WTC11 (cell line): ENCODE measurements at regions of chr19 and their contacts with region 1.

Region 1: DNA sequence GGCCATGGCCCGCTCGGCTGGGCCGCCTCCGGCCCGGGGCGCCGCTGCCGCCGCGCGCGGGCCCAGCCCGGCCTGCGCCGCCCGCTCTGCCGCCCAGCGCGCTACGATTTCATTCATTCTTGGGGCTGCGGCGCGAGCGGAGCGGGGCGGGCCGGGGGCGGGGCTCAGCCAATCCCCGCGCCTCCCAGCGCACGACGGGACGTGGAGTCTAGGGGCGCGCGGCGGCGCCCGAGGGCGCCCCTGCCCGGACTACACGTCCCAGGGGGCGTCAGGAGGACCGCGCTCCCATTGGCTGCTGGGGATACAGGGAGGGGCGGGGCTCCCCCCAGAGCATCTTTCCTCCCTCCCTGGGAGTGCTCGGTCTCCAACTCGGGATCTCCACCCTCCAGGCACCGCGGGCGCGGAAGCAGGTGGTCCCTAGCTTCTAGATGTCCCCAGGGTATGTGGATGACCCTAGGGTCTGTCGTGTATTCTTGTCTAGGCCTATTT is 5.6 kb upstream of the DPF1 start:
- DNase-seq: peak; percentile 79
- ATAC-seq: peak; percentile 35
- H3K4me3 Mint-ChIP-seq: peak overlapping the region; percentile 58
- H3K27ac Mint-ChIP-seq: no peak overlapping the region
- H3K4me1 Mint-ChIP-seq: peaks cover 20% of the 10 kb centered on the region
- H3K27me3 Mint-ChIP-seq: peaks cover 40% of the 10 kb centered on the region
- CTCF ChIP-seq: no peak

Region 2: GRCh38 chr19:38250821-38251563 is 21.4 kb after region 1 on chr19:
- CTCF ChIA-PET with region 1: interaction called, 45 read pairs
- POLR2A ChIA-PET with region 1: no interaction called
- DNase-seq: peak; percentile 38
- ATAC-seq: peak; percentile 45
- H3K4me3 Mint-ChIP-seq: peak overlapping the region; percentile 63
- H3K27ac Mint-ChIP-seq: peak overlapping the region; percentile 75
- H3K4me1 Mint-ChIP-seq: peaks cover 46% of the 10 kb centered on the region
- H3K27me3 Mint-ChIP-seq: peaks cover 8% of the 10 kb centered on the region
- CTCF ChIP-seq: no peak

Region 3: GRCh38 chr19:38319421-38320258 is 90.0 kb after region 1 on chr19 and contains the start of gene KCNK6:
- CTCF ChIA-PET with region 1: interaction called, 13 read pairs
- POLR2A ChIA-PET with region 1: no interaction called
- DNase-seq: peak; percentile 66
- ATAC-seq: peak; percentile 5
- H3K4me3 Mint-ChIP-seq: peak within 1 kb of the TSS; percentile 81
- H3K27ac Mint-ChIP-seq: no peak within 1 kb of the TSS
- H3K4me1 Mint-ChIP-seq: peaks cover 26% of the 10 kb centered on the region
- H3K27me3 Mint-ChIP-seq: peaks cover 54% of the 10 kb centered on the region
- CTCF ChIP-seq: no peak
- total RNA-seq, gene KCNK6: 12.9 to 18.3 TPM (median 13.2 TPM) in 3 replicates

Region 4: GRCh38 chr19:38374429-38375176 is 145.0 kb after region 1 on chr19 and contains the start of gene PSMD8:
- CTCF ChIA-PET with region 1: interaction called, 18 read pairs
- POLR2A ChIA-PET with region 1: no interaction called
- DNase-seq: peak; percentile 99
- ATAC-seq: peak; percentile 99
- H3K4me3 Mint-ChIP-seq: peak within 1 kb of the TSS; percentile 100
- H3K27ac Mint-ChIP-seq: peak within 1 kb of the TSS; percentile 75
- H3K4me1 Mint-ChIP-seq: peaks cover 14% of the 10 kb centered on the region
- H3K27me3 Mint-ChIP-seq: peaks cover 25% of the 10 kb centered on the region
- CTCF ChIP-seq: no peak
- total RNA-seq, gene PSMD8: 156 to 167 TPM (median 160 TPM) in 3 replicates